GM12878 (cell line): ENCODE measurements at regions of chr12 and their contacts with region 1.

Region 1: GRCh38 chr12:14995583-14996425 is 23.0 kb downstream of the PDE6H start:
- DNase-seq: peak; percentile 34
- ATAC-seq: peak; percentile 64
- H3K4me3 ChIP-seq: no peak overlapping the region
- H3K27ac ChIP-seq: no peak overlapping the region
- H3K4me1 ChIP-seq: peaks cover 6% of the 10 kb centered on the region; the same call in 1 of the 2 replicates
- H3K27me3 ChIP-seq: no peaks in the 10 kb centered on the region
- CTCF ChIP-seq: peak; percentile 34 to 62 (median 42); a peak in 4 of 6 replicates
- EP300 ChIP-seq: no peak
- POLR2A ChIP-seq: no peak
- RAD21 ChIP-seq: peak; percentile 87

Region 2: GRCh38 chr12:14723763-14724162 is 272.0 kb before region 1 on chr12:
- CTCF ChIA-PET with region 1: interaction called, 10 read pairs
- POLR2A ChIA-PET with region 1: no interaction called
- RAD21 ChIA-PET with region 1: interaction called, 20 read pairs
- SMC1A ChIA-PET with region 1: interaction called, 10 read pairs
- in situ Hi-C with region 1: loop called (anchors 5 kb)
- intact Hi-C with region 1: loop called (anchors 1 kb)
- DNase-seq: peak; percentile 37
- ATAC-seq: peak; percentile 88
- H3K4me3 ChIP-seq: no peak overlapping the region
- H3K27ac ChIP-seq: no peak overlapping the region
- H3K4me1 ChIP-seq: no peaks in the 10 kb centered on the region
- H3K27me3 ChIP-seq: no peaks in the 10 kb centered on the region
- CTCF ChIP-seq: peak; percentile 72 to 79 (median 74)
- EP300 ChIP-seq: no peak
- POLR2A ChIP-seq: no peak
- RAD21 ChIP-seq: peak; percentile 79

Region 3: DNA sequence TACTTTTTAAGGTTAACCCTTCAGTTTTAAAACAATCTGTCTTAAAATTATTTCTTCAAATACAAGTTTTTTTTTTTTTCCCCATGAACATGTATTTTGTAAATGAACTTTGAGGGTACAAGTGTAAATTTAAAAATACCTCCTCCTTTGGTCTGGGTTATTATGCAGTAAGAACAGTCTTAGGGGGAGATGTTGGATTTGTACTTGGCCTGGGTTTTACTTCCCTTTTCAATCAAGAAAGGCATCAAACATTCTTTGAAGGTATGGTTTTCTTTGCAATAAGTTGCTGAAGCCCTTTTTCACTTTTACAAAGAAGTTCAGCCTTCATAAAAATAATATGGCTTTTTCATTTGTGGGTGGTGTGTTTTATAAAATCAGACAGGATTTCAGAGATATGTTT is 213.0 kb before region 1 on chr12:
- CTCF ChIA-PET with region 1: interaction called, 5 read pairs
- POLR2A ChIA-PET with region 1: no interaction called
- RAD21 ChIA-PET with region 1: interaction called, 3 read pairs
- SMC1A ChIA-PET with region 1: interaction called, 29 read pairs
- in situ Hi-C with region 1: no loop called
- intact Hi-C with region 1: no loop called
- DNase-seq: no peak
- ATAC-seq: peak; percentile 74
- H3K4me3 ChIP-seq: no peak overlapping the region
- H3K27ac ChIP-seq: no peak overlapping the region
- H3K4me1 ChIP-seq: no peaks in the 10 kb centered on the region
- H3K27me3 ChIP-seq: no peaks in the 10 kb centered on the region
- CTCF ChIP-seq: no peak
- EP300 ChIP-seq: no peak
- POLR2A ChIP-seq: no peak
- RAD21 ChIP-seq: no peak

Region 4: DNA sequence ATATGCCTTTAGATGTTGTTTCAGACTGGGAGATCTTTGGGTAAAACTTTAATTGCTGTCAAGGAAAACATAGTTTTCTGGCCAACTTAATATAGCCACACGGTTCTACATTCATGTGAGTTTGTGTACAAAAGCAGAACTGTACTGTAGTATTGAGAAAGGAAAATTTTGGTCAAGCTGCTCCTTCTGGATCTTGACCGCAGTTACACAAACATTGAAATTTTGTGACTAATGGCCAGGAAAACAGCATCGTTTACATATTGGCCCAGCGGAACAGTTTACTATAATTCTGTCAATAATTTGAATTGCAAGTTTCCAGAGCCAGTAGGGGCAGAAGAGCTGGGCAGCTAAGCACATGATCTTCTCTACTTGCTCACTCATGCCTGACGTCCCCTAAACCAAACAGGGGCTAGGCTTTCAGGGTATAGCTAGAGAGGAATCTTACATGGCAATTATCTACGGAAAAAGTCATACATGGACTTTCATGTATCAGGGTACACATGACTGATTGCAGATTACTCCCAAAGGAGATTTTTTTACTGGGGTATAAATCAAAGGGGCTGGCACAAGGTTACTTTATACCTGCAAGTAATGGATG is 141.1 kb before region 1 on chr12:
- CTCF ChIA-PET with region 1: interaction called, 104 read pairs
- POLR2A ChIA-PET with region 1: no interaction called
- RAD21 ChIA-PET with region 1: interaction called, 70 read pairs
- SMC1A ChIA-PET with region 1: interaction called, 242 read pairs
- in situ Hi-C with region 1: loop called (anchors 5 kb)
- intact Hi-C with region 1: no loop called
- DNase-seq: no peak
- ATAC-seq: peak; percentile 84
- H3K4me3 ChIP-seq: no peak overlapping the region
- H3K27ac ChIP-seq: no peak overlapping the region
- H3K4me1 ChIP-seq: no peaks in the 10 kb centered on the region
- H3K27me3 ChIP-seq: no peaks in the 10 kb centered on the region
- CTCF ChIP-seq: no peak
- EP300 ChIP-seq: no peak
- POLR2A ChIP-seq: no peak
- RAD21 ChIP-seq: no peak

Region 5: DNA sequence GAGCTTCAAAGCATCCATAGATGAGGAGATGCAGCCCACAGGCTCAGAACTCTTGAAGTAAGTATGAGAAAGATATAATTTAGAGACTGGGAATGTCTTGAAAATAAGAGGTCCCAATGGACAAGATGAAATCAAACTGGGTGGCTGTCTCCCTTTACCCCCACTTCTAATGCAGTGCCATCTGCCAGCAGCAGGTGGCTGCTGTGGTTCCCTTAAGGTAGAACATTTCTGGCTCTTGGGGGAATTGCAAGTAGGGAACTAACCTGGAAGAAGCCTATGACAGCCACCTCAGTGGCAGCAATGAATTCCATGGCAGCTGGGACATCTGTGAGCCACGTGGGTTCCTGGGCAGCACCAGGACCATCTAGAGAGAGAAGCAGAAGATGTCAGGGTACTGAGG is 58.1 kb before region 1 on chr12:
- CTCF ChIA-PET with region 1: interaction called, 27 read pairs
- POLR2A ChIA-PET with region 1: no interaction called
- RAD21 ChIA-PET with region 1: interaction called, 17 read pairs
- SMC1A ChIA-PET with region 1: interaction called, 35 read pairs
- in situ Hi-C with region 1: no loop called
- intact Hi-C with region 1: loop called (anchors 1 kb)
- DNase-seq: no peak
- ATAC-seq: peak; percentile 74
- H3K4me3 ChIP-seq: no peak overlapping the region
- H3K27ac ChIP-seq: no peak overlapping the region
- H3K4me1 ChIP-seq: no peaks in the 10 kb centered on the region; the same call in 1 of the 2 replicates
- H3K27me3 ChIP-seq: no peaks in the 10 kb centered on the region
- CTCF ChIP-seq: peak; percentile 34 to 43 (median 37); a peak in 5 of 6 replicates
- EP300 ChIP-seq: no peak
- POLR2A ChIP-seq: no peak
- RAD21 ChIP-seq: peak; percentile 52

Region 6: GRCh38 chr12:14981049-14981448 is 14.8 kb before region 1 on chr12:
- CTCF ChIA-PET with region 1: interaction called, 7 read pairs
- POLR2A ChIA-PET with region 1: no interaction called
- RAD21 ChIA-PET with region 1: interaction called, 6 read pairs
- SMC1A ChIA-PET with region 1: interaction called, 12 read pairs
- in situ Hi-C with region 1: no loop called
- intact Hi-C with region 1: no loop called
- DNase-seq: no peak
- ATAC-seq: peak; percentile 81
- H3K4me3 ChIP-seq: no peak overlapping the region
- H3K27ac ChIP-seq: no peak overlapping the region
- H3K4me1 ChIP-seq: peaks cover 11% of the 10 kb centered on the region
- H3K27me3 ChIP-seq: no peaks in the 10 kb centered on the region
- CTCF ChIP-seq: no peak
- EP300 ChIP-seq: no peak
- POLR2A ChIP-seq: no peak
- RAD21 ChIP-seq: no peak

Region 7: DNA sequence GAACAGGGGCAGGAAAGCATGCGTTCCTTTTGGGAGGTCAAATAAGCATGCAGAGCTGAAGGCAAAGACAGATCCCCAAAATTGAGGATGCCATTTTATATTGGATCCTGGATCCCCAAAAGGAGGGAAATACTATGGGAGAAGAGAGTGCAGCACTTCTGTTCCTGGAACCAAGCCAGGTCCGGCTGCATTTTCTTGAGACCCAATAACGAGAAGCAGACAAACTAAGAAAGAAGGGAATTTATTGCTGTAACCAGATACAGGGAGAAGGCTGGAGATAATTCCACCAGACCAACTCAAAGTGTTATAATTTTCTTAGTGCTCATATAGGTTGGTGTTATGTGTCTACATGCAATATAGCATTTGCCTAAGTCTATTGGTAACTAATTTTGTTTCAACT is 37.8 kb after region 1 on chr12:
- CTCF ChIA-PET with region 1: no interaction called
- POLR2A ChIA-PET with region 1: no interaction called
- RAD21 ChIA-PET with region 1: no interaction called
- SMC1A ChIA-PET with region 1: no interaction called
- in situ Hi-C with region 1: no loop called
- intact Hi-C with region 1: no loop called
- DNase-seq: no peak
- ATAC-seq: no peak
- H3K4me3 ChIP-seq: no peak overlapping the region
- H3K27ac ChIP-seq: no peak overlapping the region
- H3K4me1 ChIP-seq: no peaks in the 10 kb centered on the region
- H3K27me3 ChIP-seq: no peaks in the 10 kb centered on the region
- CTCF ChIP-seq: no peak
- EP300 ChIP-seq: no peak
- POLR2A ChIP-seq: no peak
- RAD21 ChIP-seq: no peak